Ovary (tissue), 10 donors: ENCODE measurements at regions of chr12 and their contacts with region 1.

Region 1: DNA sequence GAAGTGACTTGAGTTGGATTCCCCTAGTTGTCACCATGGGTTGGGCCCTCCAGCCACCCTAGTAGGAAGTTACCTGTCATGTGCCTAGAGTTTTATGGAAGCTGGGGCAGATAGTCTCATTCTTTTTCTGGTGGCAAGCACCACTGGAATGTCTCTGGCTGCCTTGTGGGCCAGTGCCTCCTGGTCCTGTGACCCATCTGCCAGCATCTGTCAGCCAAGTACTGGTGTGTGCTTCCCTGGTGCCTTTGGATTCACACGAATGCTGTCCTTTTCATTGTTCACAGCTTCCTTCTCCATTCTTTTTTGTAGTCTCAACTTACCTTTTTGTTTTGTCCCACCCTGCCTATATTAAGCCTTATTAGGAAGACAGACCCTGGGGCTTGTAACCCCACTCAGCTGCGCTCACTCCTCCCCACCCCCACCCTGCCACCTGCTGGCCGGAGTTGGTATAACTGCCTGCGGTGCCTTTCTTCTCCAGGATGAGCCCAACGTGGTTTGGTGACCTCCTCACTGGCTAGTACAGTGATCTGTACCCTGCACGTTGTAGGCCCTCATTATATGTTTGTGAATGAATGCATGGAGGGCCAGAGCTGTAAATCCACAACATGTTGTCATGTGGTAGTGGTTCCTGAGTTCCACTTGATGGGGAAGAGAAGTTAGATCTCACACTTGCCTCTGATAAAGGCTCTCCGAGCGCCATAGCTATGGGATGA is 125.7 kb downstream of the TSPAN9 start:
- DNase-seq: peak; percentile 53 to 83 (median 74)
- H3K4me3 ChIP-seq: no peak overlapping the region
- H3K27ac ChIP-seq: no peak overlapping the region
- H3K4me1 ChIP-seq: peaks cover 6% of the 10 kb centered on the region
- H3K27me3 ChIP-seq: no peaks in the 10 kb centered on the region
- CTCF ChIP-seq: peak; percentile 79 to 84 (median 82)
- EP300 ChIP-seq: no peak
- POLR2A ChIP-seq: no peak

Region 2: GRCh38 chr12:3107071-3107583 is 95.8 kb before region 1 on chr12:
- intact Hi-C with region 1: no loop called
- DNase-seq: peak; percentile 52 to 77 (median 75)
- H3K4me3 ChIP-seq: peak overlapping the region; percentile 5
- H3K27ac ChIP-seq: peak overlapping the region in 1 of 2 donors; percentile 51
- H3K4me1 ChIP-seq: peaks cover 19% of the 10 kb centered on the region
- H3K27me3 ChIP-seq: no peaks in the 10 kb centered on the region
- CTCF ChIP-seq: no peak
- EP300 ChIP-seq: no peak
- POLR2A ChIP-seq: no peak

Region 3: DNA sequence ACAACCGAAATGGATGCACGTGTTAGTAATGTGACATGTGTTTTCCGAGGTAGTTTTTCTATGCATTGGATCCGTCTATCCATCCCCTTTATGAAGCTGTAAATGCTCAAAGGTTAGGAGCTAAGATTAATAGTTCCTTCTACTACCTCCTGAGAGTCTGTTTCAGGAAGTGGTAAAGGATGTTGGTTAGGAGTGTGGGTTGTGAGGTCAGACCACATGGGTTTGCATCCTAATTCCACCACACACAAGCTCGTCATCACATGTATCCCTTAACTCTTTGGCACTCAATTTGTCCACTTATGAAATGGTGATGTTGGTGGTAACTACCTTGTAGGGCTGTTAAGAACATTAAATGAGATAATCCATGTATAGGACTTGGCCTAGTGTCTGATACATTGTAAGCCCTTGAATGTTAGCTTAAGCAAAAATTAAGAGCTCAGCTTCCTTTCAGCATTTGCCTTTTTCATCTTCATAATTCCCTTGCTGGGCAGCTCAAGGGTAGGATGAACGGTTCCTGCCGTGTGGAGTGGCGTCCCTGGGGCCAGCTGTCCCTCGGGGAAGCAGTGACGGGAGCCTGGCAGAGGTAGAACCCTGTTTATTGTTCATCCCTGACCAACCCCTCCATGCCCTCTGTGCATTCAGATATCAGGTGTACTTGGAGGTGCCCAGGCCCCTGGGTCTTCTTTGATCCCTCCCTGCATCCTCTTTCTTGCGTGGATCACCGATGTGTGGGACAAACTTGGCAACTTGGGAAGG is 73.4 kb before region 1 on chr12:
- intact Hi-C with region 1: loop called in 2 of 4 experiments (anchors 5 to 10 kb)
- DNase-seq: no peak
- H3K4me3 ChIP-seq: no peak overlapping the region
- H3K27ac ChIP-seq: peak overlapping the region in 1 of 2 donors; percentile 48
- H3K4me1 ChIP-seq: peaks cover 10% of the 10 kb centered on the region
- H3K27me3 ChIP-seq: no peaks in the 10 kb centered on the region
- CTCF ChIP-seq: no peak
- EP300 ChIP-seq: no peak
- POLR2A ChIP-seq: no peak

Region 4: GRCh38 chr12:3135522-3136461 is 67.1 kb before region 1 on chr12:
- intact Hi-C with region 1: loop called (anchors 5 to 10 kb)
- DNase-seq: peak in 3 of 5 donors; percentile 44 to 59 (median 57)
- H3K4me3 ChIP-seq: no peak overlapping the region
- H3K27ac ChIP-seq: no peak overlapping the region
- H3K4me1 ChIP-seq: peaks cover 29% of the 10 kb centered on the region
- H3K27me3 ChIP-seq: no peaks in the 10 kb centered on the region
- CTCF ChIP-seq: peak; percentile 63 to 82 (median 78)
- EP300 ChIP-seq: no peak
- POLR2A ChIP-seq: no peak

Region 5: DNA sequence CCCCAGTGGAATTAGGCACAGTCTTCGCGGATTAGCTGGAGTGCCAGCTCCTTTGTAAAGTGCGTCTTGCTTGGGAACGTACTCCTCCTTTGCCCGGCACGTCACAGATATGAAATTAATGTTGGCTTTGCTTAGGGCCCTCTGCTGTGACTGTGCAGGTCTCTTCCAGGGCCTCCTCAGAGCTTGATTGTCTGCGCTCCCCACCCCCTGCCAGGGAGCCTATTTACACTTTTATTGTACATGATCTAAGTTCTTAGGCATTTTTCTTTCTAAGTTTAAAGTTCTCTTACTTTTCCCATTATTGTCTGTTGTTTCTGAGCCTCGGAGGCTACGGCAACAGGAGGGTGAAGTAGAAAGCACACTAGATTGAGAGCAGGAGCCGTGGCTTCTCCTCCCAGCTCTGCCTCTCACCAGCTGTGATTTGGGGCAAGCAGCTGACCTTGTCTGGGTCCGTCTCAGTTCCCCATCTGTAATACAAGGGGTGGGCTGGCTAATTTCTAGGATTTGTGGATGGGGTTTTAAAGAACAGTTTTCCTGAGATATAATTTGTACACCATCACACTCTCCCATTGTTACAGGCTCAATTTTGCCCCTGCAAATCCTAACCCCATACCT is 43.9 kb before region 1 on chr12:
- intact Hi-C with region 1: no loop called
- DNase-seq: peak; percentile 36 to 64 (median 41)
- H3K4me3 ChIP-seq: no peak overlapping the region
- H3K27ac ChIP-seq: peak overlapping the region; percentile 6 to 64
- H3K4me1 ChIP-seq: peaks cover 9% of the 10 kb centered on the region
- H3K27me3 ChIP-seq: no peaks in the 10 kb centered on the region
- CTCF ChIP-seq: no peak
- EP300 ChIP-seq: no peak
- POLR2A ChIP-seq: no peak